ENCODE measurements at regions of chr9 and their contacts with region 1.

Region 1: DNA sequence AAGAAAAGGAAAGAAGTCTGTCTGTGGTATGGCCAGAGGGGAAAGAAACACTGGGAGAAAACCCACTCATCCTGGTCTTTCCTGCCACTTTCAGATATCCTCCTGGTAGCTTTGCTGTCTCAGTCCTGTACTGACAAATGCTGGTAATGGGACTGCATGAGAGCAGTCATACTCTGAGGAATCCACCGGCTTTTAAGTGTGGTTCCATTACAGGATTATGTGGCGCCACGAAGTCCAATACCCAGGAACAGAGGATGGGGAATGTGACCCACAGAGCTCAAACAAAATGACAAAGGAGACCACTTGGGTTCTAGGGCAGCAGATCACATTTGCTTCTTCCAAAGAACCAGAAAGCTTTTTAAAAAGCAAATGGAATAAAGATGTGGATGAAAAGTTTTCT is 26.3 kb upstream of the FBP1 start:
- DNase-seq: no peak
- H3K4me3 ChIP-seq: no peak overlapping the region
- H3K27ac ChIP-seq: no peak overlapping the region
- H3K4me1 ChIP-seq: 0 out of 2 replicates have a peak, but pooled peaks cover 3% of the 10 kb centered on the region
- H3K27me3 ChIP-seq: no peaks in the 10 kb centered on the region
- CTCF ChIP-seq: no peak

Region 2: GRCh38 chr9:94639061-94639998 is 26.3 kb before region 1 on chr9 and contains the start of gene FBP1:
- CTCF ChIA-PET with region 1: interaction called, 7 read pairs
- POLR2A ChIA-PET with region 1: interaction called, 12 read pairs
- intact Hi-C with region 1: no loop called
- DNase-seq: peak; percentile 44 to 60
- H3K4me3 ChIP-seq: peak within 1 kb of the TSS; percentile 76
- H3K27ac ChIP-seq: peak within 1 kb of the TSS; percentile 84
- H3K4me1 ChIP-seq: peaks cover 49% of the 10 kb centered on the region
- H3K27me3 ChIP-seq: no peaks in the 10 kb centered on the region
- CTCF ChIP-seq: no peak
- total RNA-seq, gene FBP1: 34.9 and 35.0 TPM in 2 replicates